IMR-90 (cell line): ENCODE measurements at regions of chr15 and their contacts with region 1.

Region 1: DNA sequence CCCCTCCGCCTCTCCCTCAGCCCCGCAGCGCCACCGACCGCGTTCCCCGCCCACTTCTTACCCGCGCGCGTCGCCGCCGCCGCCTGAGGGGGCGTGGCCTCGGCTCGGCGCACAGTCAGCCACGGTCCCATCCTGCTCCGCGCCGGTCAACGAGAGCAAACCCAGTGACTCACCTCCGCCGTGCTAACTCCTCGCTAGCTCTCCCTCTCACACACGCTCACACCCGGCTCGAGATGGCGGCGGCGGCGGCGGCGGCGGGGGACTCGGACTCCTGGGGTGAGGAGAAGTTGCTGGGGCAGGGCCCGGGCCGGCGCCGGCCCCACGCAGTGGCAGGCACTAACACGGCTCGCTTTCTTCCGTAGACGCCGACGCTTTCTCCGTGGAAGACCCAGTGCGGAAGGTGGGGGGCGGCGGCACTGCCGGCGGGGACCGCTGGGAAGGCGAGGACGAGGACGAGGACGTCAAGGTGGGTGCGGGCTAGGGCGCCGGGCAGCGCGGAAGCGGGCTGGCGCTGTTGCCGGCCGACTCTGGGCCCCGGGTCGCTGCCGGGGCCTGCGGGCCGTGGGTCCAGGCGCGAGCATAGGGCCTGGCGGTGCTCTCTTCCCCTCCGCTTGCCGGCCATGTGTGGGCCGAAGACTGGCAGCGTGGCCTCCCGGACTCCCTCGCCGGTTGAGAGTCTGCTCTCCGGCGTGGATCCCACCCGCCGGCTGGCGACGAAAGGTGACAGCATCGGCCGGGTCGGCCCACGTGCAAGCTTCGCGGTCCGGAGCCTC is at the start of gene EIF3J:
- DNase-seq: peak; percentile 97
- ATAC-seq: peak; percentile 87
- H3K4me3 ChIP-seq: peak within 1 kb of the TSS; percentile 88
- H3K27ac ChIP-seq: peak within 1 kb of the TSS; percentile 87
- H3K4me1 ChIP-seq: peaks cover 12% of the 10 kb centered on the region
- H3K27me3 ChIP-seq: no peaks in the 10 kb centered on the region
- CTCF ChIP-seq: no peak
- POLR2A ChIP-seq: peak; percentile 90
- RAD21 ChIP-seq: no peak
- total RNA-seq, gene EIF3J: 51.6 and 57.2 TPM in 2 replicates

Region 2: GRCh38 chr15:43872416-43873020 is 664.6 kb before region 1 on chr15:
- CTCF ChIA-PET with region 1: no interaction called
- POLR2A ChIA-PET with region 1: no interaction called
- dilution Hi-C with region 1: no loop called
- in situ Hi-C with region 1: no loop called
- intact Hi-C with region 1: loop called (anchors 10 kb)
- DNase-seq: peak; percentile 83
- ATAC-seq: peak; percentile 98
- H3K4me3 ChIP-seq: no peak overlapping the region
- H3K27ac ChIP-seq: no peak overlapping the region
- H3K4me1 ChIP-seq: no peaks in the 10 kb centered on the region
- H3K27me3 ChIP-seq: no peaks in the 10 kb centered on the region
- CTCF ChIP-seq: peak; percentile 81
- POLR2A ChIP-seq: no peak
- RAD21 ChIP-seq: peak; percentile 85

Region 3: DNA sequence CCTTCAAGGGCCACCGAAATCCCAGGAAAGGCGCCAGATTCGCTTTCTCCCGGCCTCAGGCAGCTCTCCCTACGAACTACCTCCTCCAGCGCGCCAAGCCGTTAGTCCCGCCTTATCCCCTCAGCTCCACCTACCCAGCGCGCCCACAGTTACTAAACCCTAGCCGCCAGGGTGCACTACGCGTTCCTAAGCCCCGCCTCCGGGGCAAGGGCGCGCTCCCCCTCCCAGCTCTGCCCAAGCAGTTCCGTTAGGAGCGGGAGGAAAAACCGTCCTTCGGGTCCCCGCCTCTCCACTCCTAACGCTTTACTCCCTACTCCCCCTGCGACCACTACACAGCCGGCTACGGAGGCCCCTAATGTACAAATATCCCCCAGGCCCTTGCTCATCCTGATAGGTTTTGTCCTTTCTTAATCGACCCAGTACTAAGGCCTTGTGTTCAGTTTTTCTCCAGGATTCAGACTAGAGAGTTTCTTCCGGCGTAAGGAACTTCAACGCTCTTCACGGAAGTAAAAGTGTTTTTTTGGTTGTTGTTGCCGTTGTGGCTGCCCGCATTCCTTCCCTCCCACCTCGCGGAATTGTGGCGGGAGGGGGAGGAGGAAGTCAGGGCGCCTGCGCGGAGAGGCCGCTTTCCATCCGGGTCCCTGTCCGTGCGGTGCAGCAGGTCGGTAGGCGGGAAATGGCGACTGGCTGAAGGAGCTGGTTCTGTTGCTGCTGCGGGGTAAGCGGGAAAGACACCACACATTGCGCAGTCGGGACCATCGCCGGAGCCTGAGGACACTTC is 110.0 kb before region 1 on chr15 and contains the start of gene CTDSPL2:
- CTCF ChIA-PET with region 1: no interaction called
- POLR2A ChIA-PET with region 1: no interaction called
- dilution Hi-C with region 1: no loop called
- in situ Hi-C with region 1: no loop called
- intact Hi-C with region 1: loop called (anchors 5 kb)
- DNase-seq: peak; percentile 98
- ATAC-seq: peak; percentile 99
- H3K4me3 ChIP-seq: peak within 1 kb of the TSS; percentile 89
- H3K27ac ChIP-seq: peak within 1 kb of the TSS; percentile 89
- H3K4me1 ChIP-seq: no peaks in the 10 kb centered on the region
- H3K27me3 ChIP-seq: no peaks in the 10 kb centered on the region
- CTCF ChIP-seq: peak; percentile 48
- POLR2A ChIP-seq: peak; percentile 87
- RAD21 ChIP-seq: peak; percentile 25
- total RNA-seq, gene CTDSPL2: 47.3 and 97.5 TPM in 2 replicates